CD4-positive, alpha-beta memory T cell (primary cell): ENCODE measurements at regions of chr10 and their contacts with region 1.

Region 1: DNA sequence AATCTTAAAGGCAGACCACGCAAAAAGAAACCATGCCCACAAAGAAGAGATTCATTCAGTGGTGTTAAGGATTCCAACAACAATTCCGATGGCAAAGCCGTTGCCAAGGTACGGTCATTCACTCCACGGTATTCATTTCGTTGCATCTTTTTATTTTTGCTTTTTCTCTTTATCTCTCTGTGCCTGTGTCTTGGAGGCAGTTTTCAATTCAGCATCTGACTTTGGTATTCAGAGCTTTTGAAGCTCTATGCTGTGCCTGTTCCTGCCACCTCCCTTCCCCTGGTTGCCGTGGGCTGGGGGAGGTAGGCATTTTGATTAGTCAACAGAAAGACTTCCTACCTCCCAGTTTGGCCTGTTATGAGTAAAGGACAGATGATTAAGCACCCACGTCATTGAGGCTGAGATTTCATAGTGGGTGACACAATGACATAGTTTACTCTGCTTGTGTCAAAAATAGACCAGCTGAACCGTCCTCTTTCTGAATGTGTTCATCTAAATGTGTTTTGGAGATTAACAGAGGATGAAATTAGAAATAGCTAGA is 149.5 kb downstream of the ARID5B start:
- DNase-seq: peak; percentile 83 to 94 (median 88)
- H3K4me3 ChIP-seq: peak overlapping the region; percentile 69 to 82
- H3K4me3 Mint-ChIP-seq: peak overlapping the region; percentile 89 to 98 (median 91)
- H3K27ac ChIP-seq: peak overlapping the region; percentile 87
- H3K27ac Mint-ChIP-seq: peak overlapping the region; percentile 92 to 100 (median 98)
- H3K4me1 ChIP-seq: peaks cover 78% of the 10 kb centered on the region
- H3K4me1 Mint-ChIP-seq: peaks cover 67 to 98% (median 76%) of the 10 kb centered on the region in 4 donors
- H3K27me3 ChIP-seq: no peaks in the 10 kb centered on the region
- H3K27me3 Mint-ChIP-seq: no peaks in the 10 kb centered on the region

Region 2: DNA sequence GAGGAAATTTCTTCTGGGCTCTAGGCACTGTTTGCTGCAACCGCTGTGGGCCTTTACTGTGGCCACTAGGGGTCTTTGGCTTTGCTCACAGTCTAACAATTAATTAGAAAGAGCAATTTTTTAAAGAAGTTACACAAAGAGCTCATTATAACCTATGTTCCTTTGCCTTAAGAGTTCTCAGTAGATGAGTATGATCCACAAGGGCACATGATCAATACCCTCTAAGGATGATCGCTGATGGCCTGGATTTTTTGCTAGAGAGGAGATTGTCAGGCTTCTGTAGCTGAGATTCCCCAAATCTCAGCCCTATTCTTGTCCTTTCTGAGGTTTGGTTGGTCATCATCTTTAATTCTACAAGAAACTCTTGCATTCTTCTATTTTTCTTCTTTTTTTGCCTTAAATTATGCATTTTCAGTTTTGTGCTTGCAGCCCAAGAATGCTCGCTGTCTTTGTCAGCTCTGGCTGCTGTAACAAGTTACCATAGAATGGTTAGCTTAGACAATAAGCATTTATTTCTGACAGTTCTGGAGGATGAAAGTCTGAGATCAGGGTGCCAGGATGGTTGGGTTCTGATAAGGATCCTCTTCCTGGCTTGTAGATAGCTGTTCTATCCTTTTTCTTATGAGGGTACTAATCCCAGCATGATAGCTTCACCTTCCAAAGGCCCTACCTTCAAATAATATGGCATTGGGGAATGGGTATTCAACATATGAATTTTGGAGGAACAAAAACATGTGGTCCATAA is 1025.9 kb before region 1 on chr10:
- CTCF ChIA-PET with region 1: no interaction called
- POLR2A ChIA-PET with region 1: no interaction called
- intact Hi-C with region 1: no loop called
- DNase-seq: no peak
- H3K4me3 ChIP-seq: no peak overlapping the region
- H3K4me3 Mint-ChIP-seq: no peak overlapping the region
- H3K27ac ChIP-seq: no peak overlapping the region
- H3K27ac Mint-ChIP-seq: no peak overlapping the region
- H3K4me1 ChIP-seq: no peaks in the 10 kb centered on the region
- H3K4me1 Mint-ChIP-seq: no peaks in the 10 kb centered on the region
- H3K27me3 ChIP-seq: no peaks in the 10 kb centered on the region
- H3K27me3 Mint-ChIP-seq: peaks cover 1 to 10% of the 10 kb centered on the region in 2 donors

Region 3: GRCh38 chr10:61937631-61938351 is 113.2 kb before region 1 on chr10:
- CTCF ChIA-PET with region 1: interaction called, 4 read pairs
- POLR2A ChIA-PET with region 1: interaction called, 11 read pairs
- intact Hi-C with region 1: loop called (anchors 2 kb)
- DNase-seq: no peak
- H3K4me3 ChIP-seq: peak overlapping the region in 1 of 2 donors; percentile 15
- H3K4me3 Mint-ChIP-seq: peak overlapping the region; percentile 3 to 83 (median 68)
- H3K27ac ChIP-seq: peak overlapping the region; percentile 23
- H3K27ac Mint-ChIP-seq: peak overlapping the region; percentile 31 to 94 (median 87)
- H3K4me1 ChIP-seq: peaks cover 78% of the 10 kb centered on the region
- H3K4me1 Mint-ChIP-seq: peaks cover 66 to 87% (median 75%) of the 10 kb centered on the region in 4 donors
- H3K27me3 ChIP-seq: no peaks in the 10 kb centered on the region
- H3K27me3 Mint-ChIP-seq: no peaks in the 10 kb centered on the region

Region 4: GRCh38 chr10:61992671-61993668 is 58.0 kb before region 1 on chr10:
- CTCF ChIA-PET with region 1: interaction called, 8 read pairs
- POLR2A ChIA-PET with region 1: interaction called, 29 read pairs
- intact Hi-C with region 1: loop called (anchors 2 kb)
- DNase-seq: peak; percentile 79 to 88 (median 84)
- H3K4me3 ChIP-seq: peak overlapping the region; percentile 9 to 39
- H3K4me3 Mint-ChIP-seq: peak overlapping the region; percentile 47 to 81 (median 74)
- H3K27ac ChIP-seq: peak overlapping the region; percentile 60
- H3K27ac Mint-ChIP-seq: peak overlapping the region; percentile 87 to 98 (median 94)
- H3K4me1 ChIP-seq: peaks cover 71% of the 10 kb centered on the region
- H3K4me1 Mint-ChIP-seq: peaks cover 52 to 72% (median 56%) of the 10 kb centered on the region in 4 donors
- H3K27me3 ChIP-seq: no peaks in the 10 kb centered on the region
- H3K27me3 Mint-ChIP-seq: peaks cover 0 to 3% of the 10 kb centered on the region in 2 donors

Region 5: GRCh38 chr10:62076891-62077290 is 25.9 kb after region 1 on chr10:
- CTCF ChIA-PET with region 1: interaction called, 11 read pairs
- POLR2A ChIA-PET with region 1: interaction called, 133 read pairs
- intact Hi-C with region 1: loop called (anchors 2 kb)
- DNase-seq: peak in 1 of 5 donors; percentile 24
- H3K4me3 ChIP-seq: no peak overlapping the region
- H3K4me3 Mint-ChIP-seq: peak overlapping the region; percentile 3 to 71 (median 30)
- H3K27ac ChIP-seq: no peak overlapping the region
- H3K27ac Mint-ChIP-seq: peak overlapping the region; percentile 11 to 94 (median 77)
- H3K4me1 ChIP-seq: peaks cover 84% of the 10 kb centered on the region
- H3K4me1 Mint-ChIP-seq: peaks cover 56 to 93% (median 72%) of the 10 kb centered on the region in 4 donors
- H3K27me3 ChIP-seq: no peaks in the 10 kb centered on the region
- H3K27me3 Mint-ChIP-seq: no peaks in the 10 kb centered on the region

Region 6: GRCh38 chr10:62183442-62183841 is 132.5 kb after region 1 on chr10:
- CTCF ChIA-PET with region 1: interaction called, 5 read pairs
- POLR2A ChIA-PET with region 1: interaction called, 56 read pairs
- intact Hi-C with region 1: loop called (anchors 1 kb)
- DNase-seq: peak; percentile 81 to 92 (median 88)
- H3K4me3 ChIP-seq: no peak overlapping the region
- H3K4me3 Mint-ChIP-seq: peak overlapping the region in 7 of 8 donors; percentile 24 to 65 (median 51)
- H3K27ac ChIP-seq: peak overlapping the region; percentile 42
- H3K27ac Mint-ChIP-seq: peak overlapping the region; percentile 83 to 95 (median 92)
- H3K4me1 ChIP-seq: peaks cover 71% of the 10 kb centered on the region
- H3K4me1 Mint-ChIP-seq: peaks cover 57 to 84% (median 77%) of the 10 kb centered on the region in 4 donors
- H3K27me3 ChIP-seq: no peaks in the 10 kb centered on the region
- H3K27me3 Mint-ChIP-seq: no peaks in the 10 kb centered on the region

Region 7: DNA sequence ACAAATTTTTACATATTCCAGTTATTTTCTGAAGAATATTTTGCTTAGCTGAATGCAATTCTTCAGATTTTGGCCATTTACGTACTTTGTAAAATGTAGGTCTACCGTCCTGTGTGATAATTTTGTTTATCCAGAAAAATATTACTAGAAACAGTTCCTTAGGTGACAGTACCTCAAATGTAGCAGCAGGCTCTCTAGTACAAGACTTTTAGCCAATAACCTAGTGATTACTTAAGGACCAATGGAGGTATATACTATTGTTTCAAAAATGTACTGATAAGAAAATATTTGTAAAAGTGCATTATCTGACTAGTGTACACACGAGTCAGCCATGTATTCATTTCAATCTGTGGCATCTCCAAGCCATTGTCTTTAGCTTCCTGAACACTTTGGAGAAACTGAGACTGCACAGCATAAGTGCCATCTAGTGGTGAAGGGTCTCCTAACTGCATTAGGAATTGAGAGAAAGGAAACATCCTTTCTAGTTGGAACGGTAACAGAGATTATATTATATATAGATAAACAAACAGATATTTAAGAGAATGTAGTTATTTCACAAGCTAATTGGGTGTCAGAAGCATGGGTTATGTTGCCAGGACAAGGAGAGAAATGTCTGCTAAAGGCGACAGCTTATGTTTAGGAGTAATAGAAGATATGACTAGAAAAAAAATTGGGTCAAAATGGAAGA is 194.0 kb after region 1 on chr10:
- CTCF ChIA-PET with region 1: interaction called, 32 read pairs
- POLR2A ChIA-PET with region 1: interaction called, 66 read pairs
- intact Hi-C with region 1: no loop called
- DNase-seq: peak; percentile 52 to 68 (median 65)
- H3K4me3 ChIP-seq: no peak overlapping the region
- H3K4me3 Mint-ChIP-seq: peak overlapping the region in 6 of 8 donors; percentile 22 to 62 (median 42)
- H3K27ac ChIP-seq: no peak overlapping the region
- H3K27ac Mint-ChIP-seq: peak overlapping the region in 4 of 7 donors; percentile 11 to 70 (median 37)
- H3K4me1 ChIP-seq: peaks cover 37% of the 10 kb centered on the region
- H3K4me1 Mint-ChIP-seq: peaks cover 22 to 35% (median 25%) of the 10 kb centered on the region in 4 donors
- H3K27me3 ChIP-seq: no peaks in the 10 kb centered on the region
- H3K27me3 Mint-ChIP-seq: peaks cover 0 to 1% of the 10 kb centered on the region in 2 donors